Posterior vena cava (tissue), 2 donors: ENCODE measurements at regions of chr19 and their contacts with region 1.

Region 1: DNA sequence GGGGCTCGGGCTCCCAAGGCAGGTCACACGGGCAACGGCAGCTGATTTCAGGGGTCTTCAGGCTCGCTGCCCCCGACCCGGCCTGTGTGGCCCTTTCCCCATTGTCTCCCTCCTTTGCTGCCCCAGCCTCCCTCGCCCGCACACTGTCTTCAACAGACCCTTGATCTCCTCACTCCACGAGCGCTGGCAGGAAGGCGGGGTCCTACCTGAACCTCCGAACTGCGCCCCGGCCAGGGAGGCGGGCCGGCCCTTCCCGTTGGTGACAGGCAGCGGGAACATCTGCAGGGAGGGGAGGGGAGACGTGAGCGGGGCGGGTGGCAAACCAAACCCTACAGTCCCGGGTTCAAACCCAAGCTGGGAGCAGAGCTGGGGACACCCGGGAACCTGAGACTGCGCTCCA is 6.3 kb downstream of the TCF3 start:
- DNase-seq: no peak

Region 2: GRCh38 chr19:1608359-1609102 is 37.6 kb before region 1 on chr19:
- intact Hi-C with region 1: loop called in 1 of 2 experiments (anchors 2 kb)
- DNase-seq: no peak

Region 3: GRCh38 chr19:1690699-1691307 is 44.7 kb after region 1 on chr19:
- intact Hi-C with region 1: loop called in 1 of 2 experiments (anchors 2 kb)
- DNase-seq: no peak